Mammary epithelial cell (primary cell): ENCODE measurements at regions of chr10 and their contacts with region 1.

Region 1: GRCh38 chr10:101341438-101341837 is 12.5 kb upstream of the BTRC start:
- DNase-seq: no peak
- H3K4me3 ChIP-seq: no peak overlapping the region
- H3K27ac ChIP-seq: no peak overlapping the region
- H3K4me1 ChIP-seq: no peaks in the 10 kb centered on the region
- H3K27me3 ChIP-seq: peaks cover 2% of the 10 kb centered on the region
- CTCF ChIP-seq: no peak

Region 2: DNA sequence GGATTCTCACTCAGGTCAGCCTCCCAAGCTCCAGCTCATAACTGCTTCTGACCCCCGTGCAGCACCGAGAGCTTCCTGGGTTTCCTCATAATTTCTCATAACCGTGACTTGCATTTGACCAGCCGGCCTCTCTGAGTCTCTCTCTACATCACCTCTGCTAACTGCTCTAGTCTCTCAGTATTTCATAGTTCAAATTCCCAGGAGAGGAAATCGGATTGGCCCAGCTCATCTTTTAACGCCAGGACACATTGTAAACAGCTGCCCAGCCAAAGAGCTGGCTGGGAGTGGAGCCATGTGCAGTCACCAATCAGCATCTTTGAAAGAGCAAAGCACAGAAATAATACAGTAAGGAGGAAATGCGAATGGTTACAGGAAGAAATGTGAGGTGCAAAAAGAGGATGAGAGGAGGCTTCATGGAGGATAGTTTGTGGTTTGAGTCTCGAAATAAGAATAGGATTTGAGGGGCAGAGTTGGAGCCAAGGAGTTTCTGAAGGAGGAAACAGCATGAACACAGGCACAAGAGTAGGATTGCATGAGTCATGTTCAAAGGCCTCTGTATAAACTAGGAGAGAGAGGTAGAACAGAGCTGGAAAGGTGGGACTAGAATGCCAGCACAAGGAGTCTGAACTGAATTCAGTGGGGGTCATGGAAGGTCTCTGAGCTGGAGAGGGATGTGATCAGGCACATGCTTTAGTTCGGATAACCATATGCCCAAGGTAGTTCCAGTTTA is 97.0 kb before region 1 on chr10:
- CTCF ChIA-PET with region 1: no interaction called
- dilution Hi-C with region 1: loop called (anchors 5 kb)
- in situ Hi-C with region 1: no loop called
- intact Hi-C with region 1: no loop called
- DNase-seq: no peak
- H3K4me3 ChIP-seq: no peak overlapping the region
- H3K27ac ChIP-seq: no peak overlapping the region
- H3K4me1 ChIP-seq: no peaks in the 10 kb centered on the region
- H3K27me3 ChIP-seq: peaks cover 5% of the 10 kb centered on the region
- CTCF ChIP-seq: no peak

Region 3: DNA sequence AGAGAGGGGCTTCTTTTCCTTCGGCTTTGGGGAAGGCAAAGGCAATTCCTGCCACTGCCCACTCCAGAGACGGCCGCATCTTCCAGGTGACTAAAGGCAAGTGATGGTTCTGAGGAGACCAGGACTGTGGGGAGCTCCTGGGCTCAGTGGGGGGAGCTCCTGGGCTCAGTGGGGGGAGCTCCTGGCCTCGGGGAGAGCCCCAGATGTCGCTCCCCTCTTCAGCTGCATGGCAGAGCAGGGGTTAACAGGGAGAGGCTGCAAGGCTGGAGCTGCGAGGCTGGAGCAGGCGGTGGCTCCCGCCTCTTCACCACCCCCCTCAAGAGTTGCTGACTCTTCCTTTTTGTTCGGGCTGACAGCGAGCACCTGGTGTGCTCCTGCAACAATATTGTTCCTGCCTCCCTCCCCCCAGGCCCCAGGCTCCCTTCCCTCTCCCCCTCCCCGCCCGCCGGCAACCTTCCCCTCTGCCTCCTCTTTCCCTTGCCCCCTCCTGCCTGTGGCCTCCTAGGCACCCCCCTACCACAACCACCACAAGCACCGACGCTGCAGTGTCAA is 55.8 kb before region 1 on chr10:
- CTCF ChIA-PET with region 1: no interaction called
- dilution Hi-C with region 1: no loop called
- in situ Hi-C with region 1: no loop called
- intact Hi-C with region 1: no loop called
- DNase-seq: no peak
- H3K4me3 ChIP-seq: no peak overlapping the region
- H3K27ac ChIP-seq: no peak overlapping the region
- H3K4me1 ChIP-seq: no peaks in the 10 kb centered on the region
- H3K27me3 ChIP-seq: peaks cover 22% of the 10 kb centered on the region
- CTCF ChIP-seq: no peak

Region 4: DNA sequence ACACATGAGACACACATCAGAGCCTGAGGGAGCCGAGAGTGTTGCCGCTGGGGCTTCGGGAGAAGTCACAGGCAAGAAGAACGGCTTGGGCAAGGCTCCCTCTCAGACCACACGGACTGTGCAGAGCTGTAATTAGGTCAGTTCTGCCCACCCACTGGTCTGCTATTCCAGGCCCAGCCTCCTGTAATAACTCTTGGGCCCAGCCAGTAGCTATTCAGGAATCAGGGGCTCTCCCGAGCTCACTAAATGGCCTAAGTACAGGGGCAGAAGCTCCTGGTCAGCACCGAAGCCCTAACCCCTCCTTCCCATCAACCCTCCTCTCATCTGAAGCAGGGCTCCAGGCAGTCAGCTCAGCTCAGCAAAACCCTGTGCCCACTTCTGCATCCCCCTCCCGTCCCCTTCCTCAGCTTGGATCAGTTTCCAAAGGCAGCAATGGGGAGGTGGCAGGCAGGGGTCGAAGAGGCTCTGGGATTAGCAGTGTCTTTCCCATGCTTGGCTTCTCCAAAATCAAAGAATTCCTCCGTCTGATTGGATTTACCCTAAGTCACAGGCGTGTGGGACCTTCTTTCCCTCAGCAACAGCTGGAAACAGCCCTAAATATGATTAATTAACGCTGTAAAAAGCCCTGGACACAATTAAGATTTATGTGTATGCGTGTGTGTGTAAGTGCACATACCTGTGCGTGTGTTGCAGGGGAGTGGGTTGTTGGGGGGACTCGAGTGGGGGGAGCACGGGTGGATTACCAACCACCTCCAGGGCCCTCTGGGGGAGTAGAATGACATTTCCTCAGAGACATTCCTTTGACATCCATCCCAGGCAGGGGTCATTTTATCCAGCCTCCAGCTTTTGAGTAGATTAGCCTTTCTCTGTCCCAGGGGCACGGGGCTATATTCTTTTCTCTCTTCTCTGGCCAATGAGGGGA is 35.9 kb before region 1 on chr10:
- CTCF ChIA-PET with region 1: no interaction called
- dilution Hi-C with region 1: loop called (anchors 5 kb)
- in situ Hi-C with region 1: no loop called
- intact Hi-C with region 1: no loop called
- DNase-seq: no peak
- H3K4me3 ChIP-seq: no peak overlapping the region
- H3K27ac ChIP-seq: no peak overlapping the region
- H3K4me1 ChIP-seq: peaks cover 16% of the 10 kb centered on the region
- H3K27me3 ChIP-seq: no peaks in the 10 kb centered on the region
- CTCF ChIP-seq: no peak